Activated T-helper 2 cell treated with anti-CD3 and anti-CD28 coated beads, Interferon-gamma antibody, Interleukin-2, Interleukin-4, amounts not matched to agents 10 μg/mL and 5 μg/mL and 100 μg/mL, durations not matched to agents 14 hours and 24 hours and 36 hours (primary cell): ENCODE measurements at regions of chr7 and their contacts with region 1.

Region 1: DNA sequence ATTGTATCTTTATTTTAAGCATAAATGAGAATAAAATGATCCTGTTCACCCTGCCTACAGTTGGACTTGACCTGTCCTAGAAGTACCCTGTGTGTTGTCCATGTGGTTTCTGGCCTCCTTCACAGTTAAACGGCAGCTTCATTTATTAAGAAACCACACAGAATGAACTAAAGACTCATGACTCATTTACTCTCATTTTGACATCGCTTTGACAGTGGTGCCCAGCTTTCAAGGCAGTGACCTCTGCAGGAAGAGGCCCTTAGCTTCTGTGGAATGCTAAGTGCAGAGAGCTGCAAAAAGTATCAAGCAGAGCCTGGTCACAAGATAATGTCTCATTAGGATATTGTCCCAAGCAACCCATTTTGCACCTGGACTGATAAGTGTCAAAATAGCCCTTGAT is 93.4 kb downstream of the AVL9 start:
- DNase-seq: no peak
- H3K4me3 Mint-ChIP-seq: no peak overlapping the region
- H3K27ac Mint-ChIP-seq: peak overlapping the region; percentile 77
- H3K4me1 Mint-ChIP-seq: peaks cover 30% of the 10 kb centered on the region
- H3K27me3 Mint-ChIP-seq: no peaks in the 10 kb centered on the region

Region 2: DNA sequence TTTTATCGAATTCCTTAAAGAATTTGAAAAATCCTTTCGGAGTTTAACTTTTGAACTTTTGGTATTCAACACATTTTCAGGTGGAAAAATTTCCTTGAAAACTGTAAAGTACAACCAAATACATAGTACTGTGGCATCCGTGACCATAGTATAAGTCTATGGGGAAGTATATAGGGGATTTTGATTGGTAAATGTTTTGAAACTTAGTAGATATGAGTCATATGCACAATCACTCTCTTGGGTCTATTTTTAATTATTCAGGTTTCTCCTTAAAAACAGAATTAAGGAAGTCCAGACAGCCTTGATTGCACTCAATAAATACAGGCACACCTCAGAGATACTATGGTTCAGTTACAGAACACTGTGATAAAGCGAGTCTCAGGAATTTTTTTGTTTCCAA is 29.2 kb before region 1 on chr7:
- intact Hi-C with region 1: no loop called
- DNase-seq: no peak
- H3K4me3 Mint-ChIP-seq: no peak overlapping the region
- H3K27ac Mint-ChIP-seq: no peak overlapping the region
- H3K4me1 Mint-ChIP-seq: peaks cover 15% of the 10 kb centered on the region
- H3K27me3 Mint-ChIP-seq: no peaks in the 10 kb centered on the region

Region 3: GRCh38 chr7:32618987-32619386 is 30.3 kb after region 1 on chr7:
- intact Hi-C with region 1: loop called (anchors 2 kb)
- DNase-seq: no peak
- H3K4me3 Mint-ChIP-seq: no peak overlapping the region
- H3K27ac Mint-ChIP-seq: no peak overlapping the region
- H3K4me1 Mint-ChIP-seq: peaks cover 14% of the 10 kb centered on the region
- H3K27me3 Mint-ChIP-seq: peaks cover 13% of the 10 kb centered on the region

Region 4: DNA sequence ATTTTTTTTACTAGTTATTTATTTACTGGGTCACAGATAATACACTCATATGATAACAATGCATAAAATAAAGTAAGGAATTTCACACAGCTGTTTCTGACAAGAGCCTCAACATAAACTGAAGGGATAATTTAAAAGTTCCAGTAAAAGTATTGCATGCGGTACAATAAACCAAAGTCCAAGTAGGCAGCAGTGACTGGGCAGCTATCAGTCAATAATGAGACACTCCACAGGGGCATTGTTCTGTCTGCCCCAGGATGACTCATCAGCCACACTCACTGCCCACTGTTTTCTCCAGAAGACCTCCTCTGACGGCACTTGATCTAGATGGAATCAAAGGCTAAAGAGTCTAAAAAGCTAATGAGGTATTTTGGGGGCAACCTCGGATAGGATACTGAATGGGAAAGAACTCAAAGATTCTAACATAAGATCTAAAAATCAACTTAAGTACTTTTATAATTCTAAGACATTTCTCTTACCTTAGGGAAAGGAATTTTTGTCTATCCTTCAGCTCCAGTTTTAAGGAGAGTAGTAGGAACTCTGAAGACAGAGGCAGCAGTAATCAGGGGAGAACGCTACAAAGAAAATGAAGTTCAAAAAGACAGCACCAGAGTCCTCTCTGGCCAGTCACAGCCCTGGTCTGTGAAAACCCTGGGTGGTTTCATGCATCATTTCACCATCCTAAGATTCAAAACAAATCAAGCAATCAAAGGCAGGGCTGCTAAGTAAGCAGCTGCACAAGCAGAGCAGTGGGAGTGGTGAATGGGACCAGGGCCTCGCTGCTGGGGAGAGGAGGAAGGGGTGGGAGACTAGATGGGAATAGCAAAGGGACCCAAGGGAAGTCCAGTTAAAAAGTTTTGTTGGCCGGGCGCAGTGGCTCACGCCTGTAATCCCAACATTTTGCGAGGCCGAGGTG is 81.7 kb after region 1 on chr7:
- intact Hi-C with region 1: no loop called
- DNase-seq: no peak
- H3K4me3 Mint-ChIP-seq: no peak overlapping the region
- H3K27ac Mint-ChIP-seq: no peak overlapping the region
- H3K4me1 Mint-ChIP-seq: no peaks in the 10 kb centered on the region
- H3K27me3 Mint-ChIP-seq: peaks cover 15% of the 10 kb centered on the region

Region 5: DNA sequence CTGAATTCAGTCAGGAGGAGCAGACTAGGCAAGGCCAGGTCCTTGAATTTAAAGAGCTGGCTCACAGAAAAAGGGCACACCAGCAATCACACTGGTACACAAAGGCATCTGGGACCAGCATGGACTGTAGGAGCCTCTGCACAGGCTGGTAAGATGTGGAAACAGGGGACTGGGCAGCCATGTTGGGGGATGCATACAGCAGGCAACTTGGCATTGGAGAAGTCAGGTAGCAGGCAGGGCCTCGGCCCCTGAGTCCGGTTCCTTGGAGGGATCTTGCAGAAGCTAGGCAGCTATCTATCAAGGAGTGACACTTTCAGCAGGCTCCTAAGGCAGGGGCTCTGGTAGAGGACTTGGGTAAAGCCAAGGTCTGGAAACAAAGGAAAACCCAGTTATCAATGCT is 940.4 kb after region 1 on chr7:
- intact Hi-C with region 1: no loop called
- DNase-seq: no peak
- H3K4me3 Mint-ChIP-seq: no peak overlapping the region
- H3K27ac Mint-ChIP-seq: no peak overlapping the region
- H3K4me1 Mint-ChIP-seq: no peaks in the 10 kb centered on the region
- H3K27me3 Mint-ChIP-seq: no peaks in the 10 kb centered on the region